Naive thymus-derived CD4-positive, alpha-beta T cell (primary cell): ENCODE measurements at regions of chr15 and their contacts with region 1.

Region 1: GRCh38 chr15:40421246-40422157 is 15.9 kb downstream of the IVD start:
- DNase-seq: peak; percentile 59 to 84 (median 73)
- ATAC-seq: peak; percentile 97
- H3K4me3 ChIP-seq: peak overlapping the region; percentile 19
- H3K4me3 Mint-ChIP-seq: peak overlapping the region in 1 of 10 donors; percentile 4
- H3K27ac ChIP-seq: no peak overlapping the region
- H3K27ac Mint-ChIP-seq: peak overlapping the region in 1 of 9 donors; percentile 32
- H3K4me1 ChIP-seq: peaks cover 0 to 3% of the 10 kb centered on the region in 2 donors
- H3K4me1 Mint-ChIP-seq: peaks cover 0 to 7% (median 0%) of the 10 kb centered on the region in 7 donors
- H3K27me3 ChIP-seq: no peaks in the 10 kb centered on the region
- H3K27me3 Mint-ChIP-seq: no peaks in the 10 kb centered on the region

Region 2: GRCh38 chr15:40204100-40204499 is 217.4 kb before region 1 on chr15:
- CTCF ChIA-PET with region 1: no interaction called
- POLR2A ChIA-PET with region 1: no interaction called
- intact Hi-C with region 1: no loop called
- DNase-seq: no peak
- ATAC-seq: no peak
- H3K4me3 ChIP-seq: no peak overlapping the region
- H3K4me3 Mint-ChIP-seq: no peak overlapping the region
- H3K27ac ChIP-seq: no peak overlapping the region
- H3K27ac Mint-ChIP-seq: no peak overlapping the region
- H3K4me1 ChIP-seq: no peaks in the 10 kb centered on the region
- H3K4me1 Mint-ChIP-seq: peaks cover 0 to 4% (median 2%) of the 10 kb centered on the region in 7 donors
- H3K27me3 ChIP-seq: no peaks in the 10 kb centered on the region
- H3K27me3 Mint-ChIP-seq: no peaks in the 10 kb centered on the region

Region 3: GRCh38 chr15:40217159-40217824 is 204.2 kb before region 1 on chr15:
- CTCF ChIA-PET with region 1: no interaction called
- POLR2A ChIA-PET with region 1: no interaction called
- intact Hi-C with region 1: loop called in 1 of 2 experiments (anchors 5 kb)
- DNase-seq: peak in 7 of 9 donors; percentile 50 to 75 (median 63)
- ATAC-seq: peak; percentile 96
- H3K4me3 ChIP-seq: no peak overlapping the region
- H3K4me3 Mint-ChIP-seq: no peak overlapping the region
- H3K27ac ChIP-seq: no peak overlapping the region
- H3K27ac Mint-ChIP-seq: no peak overlapping the region
- H3K4me1 ChIP-seq: no peaks in the 10 kb centered on the region
- H3K4me1 Mint-ChIP-seq: peaks cover 0 to 2% (median 0%) of the 10 kb centered on the region in 7 donors
- H3K27me3 ChIP-seq: no peaks in the 10 kb centered on the region
- H3K27me3 Mint-ChIP-seq: no peaks in the 10 kb centered on the region

Region 4: GRCh38 chr15:40282144-40282868 is 139.2 kb before region 1 on chr15:
- CTCF ChIA-PET with region 1: interaction called, 4 read pairs
- POLR2A ChIA-PET with region 1: no interaction called
- intact Hi-C with region 1: loop called (anchors 1 kb)
- DNase-seq: peak in 7 of 9 donors; percentile 39 to 66 (median 50)
- ATAC-seq: peak; percentile 79
- H3K4me3 ChIP-seq: peak overlapping the region; percentile 57
- H3K4me3 Mint-ChIP-seq: peak overlapping the region in 9 of 10 donors; percentile 42 to 77 (median 67)
- H3K27ac ChIP-seq: no peak overlapping the region
- H3K27ac Mint-ChIP-seq: no peak overlapping the region
- H3K4me1 ChIP-seq: peaks cover 0 to 3% of the 10 kb centered on the region in 2 donors
- H3K4me1 Mint-ChIP-seq: peaks cover 0 to 11% (median 5%) of the 10 kb centered on the region in 7 donors
- H3K27me3 ChIP-seq: peaks cover 0 to 13% of the 10 kb centered on the region in 2 donors
- H3K27me3 Mint-ChIP-seq: peaks cover 17 to 46% (median 21%) of the 10 kb centered on the region in 5 donors

Region 5: GRCh38 chr15:40338041-40338657 is 83.4 kb before region 1 on chr15:
- CTCF ChIA-PET with region 1: interaction called, 107 read pairs
- POLR2A ChIA-PET with region 1: no interaction called
- intact Hi-C with region 1: no loop called
- DNase-seq: peak; percentile 61 to 79 (median 76)
- ATAC-seq: peak; percentile 87
- H3K4me3 ChIP-seq: no peak overlapping the region
- H3K4me3 Mint-ChIP-seq: peak overlapping the region in 4 of 10 donors; percentile 37 to 67 (median 48)
- H3K27ac ChIP-seq: no peak overlapping the region
- H3K27ac Mint-ChIP-seq: peak overlapping the region in 4 of 9 donors; percentile 6 to 53 (median 42)
- H3K4me1 ChIP-seq: peaks cover 0 to 16% of the 10 kb centered on the region in 2 donors
- H3K4me1 Mint-ChIP-seq: peaks cover 0 to 22% (median 20%) of the 10 kb centered on the region in 7 donors
- H3K27me3 ChIP-seq: no peaks in the 10 kb centered on the region
- H3K27me3 Mint-ChIP-seq: no peaks in the 10 kb centered on the region

Region 6: DNA sequence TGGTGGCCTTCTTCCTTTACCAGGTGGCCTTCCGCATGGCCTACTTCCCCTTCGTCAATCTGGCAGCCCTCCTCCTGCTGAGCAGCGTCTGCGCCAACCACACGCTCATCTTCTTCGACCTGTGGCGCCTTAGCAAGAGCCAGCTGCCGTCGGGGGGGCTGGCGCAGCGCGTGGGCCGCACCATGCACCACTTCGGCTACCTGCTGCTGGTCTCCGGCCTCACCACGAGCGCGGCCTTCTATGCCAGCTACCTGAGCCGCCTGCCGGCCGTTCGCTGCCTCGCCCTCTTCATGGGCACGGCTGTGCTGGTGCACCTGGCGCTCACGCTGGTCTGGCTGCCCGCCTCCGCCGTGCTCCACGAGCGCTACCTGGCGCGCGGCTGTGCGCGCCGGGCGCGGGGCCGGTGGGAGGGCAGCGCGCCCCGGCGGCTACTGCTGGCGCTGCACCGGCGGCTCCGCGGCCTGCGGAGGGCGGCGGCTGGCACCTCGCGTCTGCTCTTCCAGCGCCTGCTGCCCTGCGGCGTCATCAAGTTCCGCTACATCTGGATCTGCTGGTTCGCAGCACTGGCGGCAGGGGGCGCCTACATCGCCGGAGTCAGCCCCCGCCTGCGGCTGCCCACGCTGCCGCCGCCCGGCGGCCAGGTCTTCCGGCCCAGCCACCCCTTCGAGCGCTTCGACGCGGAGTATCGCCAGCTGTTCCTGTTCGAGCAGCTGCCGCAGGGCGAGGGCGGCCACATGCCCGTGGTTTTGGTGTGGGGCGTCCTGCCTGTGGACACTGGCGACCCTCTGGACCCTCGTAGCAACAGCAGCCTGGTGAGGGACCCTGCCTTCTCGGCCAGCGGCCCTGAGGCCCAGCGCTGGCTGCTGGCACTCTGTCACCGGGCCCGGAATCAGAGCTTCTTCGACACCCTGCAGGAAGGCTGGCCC is 53.6 kb before region 1 on chr15:
- CTCF ChIA-PET with region 1: interaction called, 17 read pairs
- POLR2A ChIA-PET with region 1: interaction called, 3 read pairs
- intact Hi-C with region 1: loop called (anchors 1 kb)
- DNase-seq: peak; percentile 82 to 89 (median 86)
- ATAC-seq: peak; percentile 98
- H3K4me3 ChIP-seq: peak overlapping the region; percentile 59
- H3K4me3 Mint-ChIP-seq: peak overlapping the region; percentile 80 to 91 (median 85)
- H3K27ac ChIP-seq: no peak overlapping the region
- H3K27ac Mint-ChIP-seq: peak overlapping the region in 8 of 9 donors; percentile 45 to 91 (median 79)
- H3K4me1 ChIP-seq: peaks cover 19 to 24% of the 10 kb centered on the region in 2 donors
- H3K4me1 Mint-ChIP-seq: peaks cover 14 to 33% (median 26%) of the 10 kb centered on the region in 7 donors
- H3K27me3 ChIP-seq: no peaks in the 10 kb centered on the region
- H3K27me3 Mint-ChIP-seq: peaks cover 0 to 16% (median 0%) of the 10 kb centered on the region in 5 donors

Region 7: GRCh38 chr15:40405501-40406381 is 15.8 kb before region 1 on chr15 and contains the start of gene IVD:
- CTCF ChIA-PET with region 1: interaction called, 5 read pairs
- POLR2A ChIA-PET with region 1: interaction called, 4 read pairs
- intact Hi-C with region 1: loop called in 1 of 2 experiments (anchors 1 kb)
- DNase-seq: peak; percentile 67 to 88 (median 79)
- ATAC-seq: peak; percentile 99
- H3K4me3 ChIP-seq: peak within 1 kb of the TSS; percentile 49
- H3K4me3 Mint-ChIP-seq: peak within 1 kb of the TSS; percentile 79 to 94 (median 92)
- H3K27ac ChIP-seq: peak within 1 kb of the TSS; percentile 70
- H3K27ac Mint-ChIP-seq: peak within 1 kb of the TSS; percentile 38 to 92 (median 90)
- H3K4me1 ChIP-seq: peaks cover 6 to 15% of the 10 kb centered on the region in 2 donors
- H3K4me1 Mint-ChIP-seq: peaks cover 9 to 49% (median 30%) of the 10 kb centered on the region in 7 donors
- H3K27me3 ChIP-seq: no peaks in the 10 kb centered on the region
- H3K27me3 Mint-ChIP-seq: no peaks in the 10 kb centered on the region
- total RNA-seq, gene IVD: 47.2 to 81.8 (median 64.7) TPM

Region 8: DNA sequence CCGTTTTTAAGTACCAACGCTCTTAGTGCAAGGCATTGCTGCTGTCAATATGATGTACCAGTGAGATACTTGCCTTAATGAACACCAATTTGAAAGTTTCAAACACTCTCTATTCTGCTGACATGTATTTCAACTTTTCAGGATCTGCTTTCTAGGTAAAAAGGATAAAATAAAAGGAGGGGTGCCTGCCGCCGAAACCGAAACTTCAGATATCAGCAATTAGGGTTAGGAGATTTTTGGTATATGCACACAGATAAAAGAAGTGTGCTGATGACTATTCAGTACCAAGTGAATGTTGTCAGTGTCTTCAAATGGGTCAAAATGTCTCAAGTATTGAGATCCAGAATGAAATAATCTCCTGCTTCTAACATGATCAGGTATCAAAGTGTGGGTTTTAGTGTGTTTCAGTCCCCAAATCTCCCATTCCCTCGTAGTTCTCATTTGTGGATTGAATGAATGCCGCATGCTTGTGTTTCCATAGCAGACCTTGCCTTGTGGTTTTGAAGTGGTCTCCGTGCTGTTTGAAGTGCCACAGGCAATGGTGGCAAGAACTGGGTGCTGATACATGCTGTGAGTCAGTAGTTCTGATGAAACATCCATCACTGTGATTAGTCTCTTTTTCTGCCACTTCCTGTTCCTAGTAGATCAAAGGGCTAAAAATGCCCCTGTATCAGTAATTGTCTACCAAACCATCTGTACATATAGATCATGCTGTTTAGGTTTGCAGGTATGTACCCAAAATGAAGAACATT is 71.8 kb after region 1 on chr15:
- CTCF ChIA-PET with region 1: no interaction called
- POLR2A ChIA-PET with region 1: no interaction called
- intact Hi-C with region 1: no loop called
- DNase-seq: peak in 1 of 9 donors; percentile 39
- ATAC-seq: peak; percentile 79
- H3K4me3 ChIP-seq: no peak overlapping the region
- H3K4me3 Mint-ChIP-seq: peak overlapping the region in 1 of 10 donors; percentile 29
- H3K27ac ChIP-seq: no peak overlapping the region
- H3K27ac Mint-ChIP-seq: peak overlapping the region in 2 of 9 donors; percentile 10 to 47
- H3K4me1 ChIP-seq: peaks cover 0 to 10% of the 10 kb centered on the region in 2 donors
- H3K4me1 Mint-ChIP-seq: peaks cover 0 to 17% (median 14%) of the 10 kb centered on the region in 7 donors
- H3K27me3 ChIP-seq: no peaks in the 10 kb centered on the region
- H3K27me3 Mint-ChIP-seq: peaks cover 0 to 10% (median 0%) of the 10 kb centered on the region in 5 donors